ENCODE measurements at regions of chr13 and their contacts with region 1.

Region 1: DNA sequence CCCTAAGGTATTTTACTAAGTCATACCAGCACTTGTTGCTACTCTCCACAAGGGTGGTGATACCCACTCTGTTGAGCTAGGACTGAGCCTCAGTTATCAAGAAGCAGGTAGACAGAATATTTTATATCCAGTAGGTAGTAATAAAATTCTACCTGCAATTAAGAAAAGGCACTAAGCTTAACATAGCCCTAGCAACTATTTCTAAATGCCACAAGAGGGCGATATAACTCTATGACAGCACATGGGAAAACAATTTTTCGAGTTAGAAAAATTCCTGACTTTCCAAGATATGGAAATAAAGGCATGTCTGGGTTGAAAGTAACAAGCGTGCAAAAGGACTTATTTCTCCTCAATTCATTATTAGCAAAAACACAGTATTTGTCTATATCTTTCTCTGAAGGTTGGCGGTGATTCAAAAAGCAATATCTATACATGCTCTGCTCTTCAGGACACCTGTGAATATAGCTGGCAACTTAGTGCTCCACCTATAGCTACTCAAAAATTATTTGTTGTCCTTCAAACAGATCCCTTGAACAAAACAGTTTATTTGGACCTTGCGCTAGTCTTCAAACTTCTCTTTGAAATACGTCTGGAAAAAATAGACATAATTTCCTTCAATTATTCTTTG is 14.7 kb downstream of the CCDC169 start:
- DNase-seq: no peak
- H3K4me3 ChIP-seq: no peak overlapping the region
- H3K27ac ChIP-seq: no peak overlapping the region
- H3K4me1 ChIP-seq: no peaks in the 10 kb centered on the region
- H3K27me3 ChIP-seq: no peaks in the 10 kb centered on the region
- CTCF ChIP-seq: peak; percentile 49 to 80 (median 77)

Region 2: DNA sequence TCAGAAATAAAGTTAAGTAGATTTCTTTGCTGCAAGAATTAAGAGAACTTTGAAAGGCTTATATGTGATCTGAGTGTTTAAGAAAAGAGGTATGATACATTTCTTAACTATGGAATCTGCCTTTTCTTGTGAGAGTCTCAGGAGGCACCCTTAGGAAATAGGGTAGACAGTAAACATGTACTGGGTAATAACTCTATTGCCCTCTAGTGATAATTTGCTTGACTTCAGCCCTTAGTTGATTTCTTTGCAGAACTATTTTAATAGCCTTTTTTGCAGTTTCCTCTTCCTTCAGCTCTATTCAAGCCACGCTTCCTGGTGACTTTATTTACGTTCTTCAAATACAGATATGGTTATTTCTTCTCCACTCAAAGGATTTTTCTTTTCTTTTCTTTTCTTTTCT is 112.3 kb after region 1 on chr13:
- intact Hi-C with region 1: loop called (anchors 2 kb)
- DNase-seq: no peak
- H3K4me3 ChIP-seq: no peak overlapping the region
- H3K27ac ChIP-seq: no peak overlapping the region
- H3K4me1 ChIP-seq: no peaks in the 10 kb centered on the region
- H3K27me3 ChIP-seq: no peaks in the 10 kb centered on the region
- CTCF ChIP-seq: peak in 2 of 3 experiments; percentile 21 to 42